ENCODE measurements at regions of chr1 and their contacts with region 1.

Region 1: DNA sequence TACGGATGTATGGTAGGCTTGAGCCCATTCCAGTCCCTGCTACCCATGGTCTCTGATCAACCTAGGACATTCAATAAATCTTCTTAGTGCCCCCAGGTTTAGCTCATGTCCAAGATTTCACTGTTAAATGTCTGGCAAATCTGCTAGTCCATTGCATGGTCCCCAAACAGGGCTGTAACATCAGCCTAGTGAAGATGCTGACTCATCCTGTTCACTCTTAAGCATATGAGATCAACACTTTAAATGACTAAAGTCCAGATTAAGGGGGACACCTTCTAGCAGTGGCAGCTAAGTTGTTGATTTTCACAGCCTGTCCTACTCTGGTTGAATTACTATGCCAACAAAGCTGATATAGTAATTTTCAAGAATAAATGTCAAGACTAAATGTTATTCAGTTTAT is 46.5 kb upstream of the NUF2 start:
- DNase-seq: peak; percentile 35
- ATAC-seq: peak; percentile 57; the same call in 1 of the 2 replicates
- H3K4me3 ChIP-seq: no peak overlapping the region
- H3K27ac ChIP-seq: no peak overlapping the region
- H3K4me1 ChIP-seq: no peaks in the 10 kb centered on the region
- H3K27me3 ChIP-seq: no peaks in the 10 kb centered on the region
- CTCF ChIP-seq: no peak
- POLR2A ChIP-seq: no peak
- RAD21 ChIP-seq: no peak

Region 2: DNA sequence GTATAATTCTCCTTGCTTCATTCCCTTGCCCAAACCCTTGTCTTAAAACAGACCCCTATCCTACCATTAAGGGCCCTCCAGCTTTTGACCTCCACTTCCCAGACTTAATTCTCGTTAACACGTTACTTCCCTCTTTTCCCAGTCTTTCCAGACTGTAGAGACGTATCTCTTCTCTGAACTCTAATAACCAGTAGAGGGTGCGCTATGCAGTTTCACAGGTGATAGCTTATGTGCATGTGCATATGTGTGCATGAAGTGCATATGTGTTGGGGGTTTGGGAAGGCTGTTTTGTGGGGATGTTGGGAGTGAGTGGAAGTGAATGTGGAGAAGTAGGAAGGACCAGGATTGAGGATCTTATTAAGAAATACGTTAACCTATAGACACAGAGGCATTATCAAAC is 336.2 kb before region 1 on chr1:
- CTCF ChIA-PET with region 1: no interaction called
- POLR2A ChIA-PET with region 1: no interaction called
- dilution Hi-C with region 1: no loop called
- in situ Hi-C with region 1: no loop called
- intact Hi-C with region 1: no loop called
- DNase-seq: no peak
- ATAC-seq: no peak
- H3K4me3 ChIP-seq: no peak overlapping the region
- H3K27ac ChIP-seq: no peak overlapping the region
- H3K4me1 ChIP-seq: no peaks in the 10 kb centered on the region; the same call in 1 of the 2 replicates
- H3K27me3 ChIP-seq: no peaks in the 10 kb centered on the region
- CTCF ChIP-seq: no peak
- POLR2A ChIP-seq: no peak
- RAD21 ChIP-seq: no peak

Region 3: GRCh38 chr1:163240705-163241104 is 34.5 kb before region 1 on chr1:
- CTCF ChIA-PET with region 1: no interaction called
- POLR2A ChIA-PET with region 1: interaction called, 9 read pairs
- dilution Hi-C with region 1: no loop called
- in situ Hi-C with region 1: loop called (anchors 5 kb)
- intact Hi-C with region 1: no loop called
- DNase-seq: no peak
- ATAC-seq: no peak
- H3K4me3 ChIP-seq: no peak overlapping the region
- H3K27ac ChIP-seq: no peak overlapping the region
- H3K4me1 ChIP-seq: no peaks in the 10 kb centered on the region
- H3K27me3 ChIP-seq: no peaks in the 10 kb centered on the region
- CTCF ChIP-seq: no peak
- POLR2A ChIP-seq: no peak
- RAD21 ChIP-seq: no peak

Region 4: DNA sequence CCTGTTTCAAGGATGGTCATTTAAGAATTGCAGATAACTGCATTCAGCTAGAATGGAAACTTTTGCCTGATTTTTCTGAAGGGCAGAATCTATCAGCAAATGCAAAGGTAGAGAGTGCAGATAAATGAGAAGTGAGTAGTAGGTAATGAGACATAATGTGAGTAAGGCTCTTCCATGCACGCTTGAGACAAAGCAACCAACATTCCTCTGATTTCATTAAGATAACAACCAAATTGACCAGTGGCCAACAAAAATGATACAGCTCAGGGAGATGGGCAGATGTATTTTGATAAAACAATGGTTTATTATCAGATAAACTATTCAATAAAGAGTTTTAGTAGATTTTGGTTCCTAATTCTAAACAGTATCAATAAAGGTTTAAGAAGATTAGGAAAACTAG is 879.4 kb after region 1 on chr1:
- CTCF ChIA-PET with region 1: no interaction called
- POLR2A ChIA-PET with region 1: no interaction called
- dilution Hi-C with region 1: no loop called
- in situ Hi-C with region 1: no loop called
- intact Hi-C with region 1: no loop called
- DNase-seq: no peak
- ATAC-seq: no peak
- H3K4me3 ChIP-seq: no peak overlapping the region
- H3K27ac ChIP-seq: no peak overlapping the region
- H3K4me1 ChIP-seq: no peaks in the 10 kb centered on the region
- H3K27me3 ChIP-seq: no peaks in the 10 kb centered on the region
- CTCF ChIP-seq: no peak
- POLR2A ChIP-seq: no peak
- RAD21 ChIP-seq: no peak

Measured in IMR-90 (cell line).